GM12878 (cell line): ENCODE measurements at regions of chr4 and their contacts with region 1.

Region 1: GRCh38 chr4:177667687-177668086 is 225.4 kb upstream of the AGA start:
- DNase-seq: no peak
- ATAC-seq: peak; percentile 67
- H3K4me3 ChIP-seq: no peak overlapping the region
- H3K27ac ChIP-seq: no peak overlapping the region
- H3K4me1 ChIP-seq: no peaks in the 10 kb centered on the region
- H3K27me3 ChIP-seq: no peaks in the 10 kb centered on the region
- CTCF ChIP-seq: peak; percentile 31 to 57 (median 41); a peak in 4 of 6 replicates
- EP300 ChIP-seq: no peak
- POLR2A ChIP-seq: no peak
- RAD21 ChIP-seq: peak; percentile 58

Region 2: GRCh38 chr4:178086320-178086719 is 418.6 kb after region 1 on chr4:
- CTCF ChIA-PET with region 1: interaction called, 25 read pairs
- POLR2A ChIA-PET with region 1: no interaction called
- RAD21 ChIA-PET with region 1: interaction called, 18 read pairs
- SMC1A ChIA-PET with region 1: interaction called, 11 read pairs
- in situ Hi-C with region 1: no loop called
- intact Hi-C with region 1: no loop called
- DNase-seq: no peak
- ATAC-seq: no peak; the same call in 2 of the 3 replicates
- H3K4me3 ChIP-seq: no peak overlapping the region
- H3K27ac ChIP-seq: no peak overlapping the region
- H3K4me1 ChIP-seq: no peaks in the 10 kb centered on the region
- H3K27me3 ChIP-seq: no peaks in the 10 kb centered on the region
- CTCF ChIP-seq: no peak
- EP300 ChIP-seq: no peak
- POLR2A ChIP-seq: no peak
- RAD21 ChIP-seq: no peak

Region 3: GRCh38 chr4:178275671-178276360 is 608.1 kb after region 1 on chr4:
- CTCF ChIA-PET with region 1: interaction called, 4 read pairs
- POLR2A ChIA-PET with region 1: no interaction called
- RAD21 ChIA-PET with region 1: no interaction called
- SMC1A ChIA-PET with region 1: interaction called, 6 read pairs
- in situ Hi-C with region 1: no loop called
- intact Hi-C with region 1: loop called (anchors 10 kb)
- DNase-seq: no peak
- ATAC-seq: peak; percentile 44
- H3K4me3 ChIP-seq: no peak overlapping the region
- H3K27ac ChIP-seq: no peak overlapping the region
- H3K4me1 ChIP-seq: no peaks in the 10 kb centered on the region
- H3K27me3 ChIP-seq: no peaks in the 10 kb centered on the region
- CTCF ChIP-seq: peak in 2 of 3 experiments; percentile 13 to 24; a peak in 1 of 6 replicates
- EP300 ChIP-seq: no peak
- POLR2A ChIP-seq: no peak
- RAD21 ChIP-seq: no peak